ENCODE measurements at regions of chr12 and their contacts with region 1.

Region 1: GRCh38 chr12:26493656-26494055 is 298.3 kb downstream of the SSPN start:
- DNase-seq: peak; percentile 87
- H3K4me3 Mint-ChIP-seq: no peak overlapping the region
- H3K27ac Mint-ChIP-seq: peak overlapping the region; percentile 51
- H3K4me1 Mint-ChIP-seq: peaks cover 29% of the 10 kb centered on the region
- H3K27me3 Mint-ChIP-seq: no peaks in the 10 kb centered on the region
- CTCF ChIP-seq: no peak

Region 2: DNA sequence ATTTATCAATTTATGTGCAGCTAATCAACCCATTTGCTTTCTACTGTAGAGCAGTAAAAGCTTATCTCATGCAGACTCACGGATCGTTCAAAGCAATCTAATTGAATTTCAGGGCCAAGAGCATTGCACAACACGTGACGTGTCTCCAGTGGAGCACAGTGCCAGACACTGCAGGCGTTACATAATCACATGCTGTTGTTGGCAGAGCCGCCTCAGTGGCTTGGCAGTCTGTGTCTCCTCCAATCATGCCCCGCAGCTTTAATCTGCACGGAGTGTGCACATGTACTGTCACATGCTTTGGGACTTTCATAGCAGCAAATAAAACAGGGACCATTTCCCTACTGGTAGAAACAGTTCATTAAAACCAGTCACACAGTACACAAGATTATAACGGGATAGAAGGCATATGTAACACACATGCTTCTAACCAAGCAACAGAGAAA is 30.1 kb after region 1 on chr12:
- CTCF ChIA-PET with region 1: interaction called, 3 read pairs
- POLR2A ChIA-PET with region 1: interaction called, 60 read pairs
- intact Hi-C with region 1: no loop called
- DNase-seq: peak; percentile 98
- H3K4me3 Mint-ChIP-seq: peak overlapping the region; percentile 11
- H3K27ac Mint-ChIP-seq: no peak overlapping the region
- H3K4me1 Mint-ChIP-seq: peaks cover 12% of the 10 kb centered on the region
- H3K27me3 Mint-ChIP-seq: no peaks in the 10 kb centered on the region
- CTCF ChIP-seq: no peak

Region 3: GRCh38 chr12:26599096-26599695 is 105.5 kb after region 1 on chr12:
- CTCF ChIA-PET with region 1: no interaction called
- POLR2A ChIA-PET with region 1: no interaction called
- intact Hi-C with region 1: no loop called
- DNase-seq: no peak
- H3K4me3 Mint-ChIP-seq: no peak overlapping the region
- H3K27ac Mint-ChIP-seq: no peak overlapping the region
- H3K4me1 Mint-ChIP-seq: no peaks in the 10 kb centered on the region
- H3K27me3 Mint-ChIP-seq: no peaks in the 10 kb centered on the region
- CTCF ChIP-seq: no peak

Region 4: DNA sequence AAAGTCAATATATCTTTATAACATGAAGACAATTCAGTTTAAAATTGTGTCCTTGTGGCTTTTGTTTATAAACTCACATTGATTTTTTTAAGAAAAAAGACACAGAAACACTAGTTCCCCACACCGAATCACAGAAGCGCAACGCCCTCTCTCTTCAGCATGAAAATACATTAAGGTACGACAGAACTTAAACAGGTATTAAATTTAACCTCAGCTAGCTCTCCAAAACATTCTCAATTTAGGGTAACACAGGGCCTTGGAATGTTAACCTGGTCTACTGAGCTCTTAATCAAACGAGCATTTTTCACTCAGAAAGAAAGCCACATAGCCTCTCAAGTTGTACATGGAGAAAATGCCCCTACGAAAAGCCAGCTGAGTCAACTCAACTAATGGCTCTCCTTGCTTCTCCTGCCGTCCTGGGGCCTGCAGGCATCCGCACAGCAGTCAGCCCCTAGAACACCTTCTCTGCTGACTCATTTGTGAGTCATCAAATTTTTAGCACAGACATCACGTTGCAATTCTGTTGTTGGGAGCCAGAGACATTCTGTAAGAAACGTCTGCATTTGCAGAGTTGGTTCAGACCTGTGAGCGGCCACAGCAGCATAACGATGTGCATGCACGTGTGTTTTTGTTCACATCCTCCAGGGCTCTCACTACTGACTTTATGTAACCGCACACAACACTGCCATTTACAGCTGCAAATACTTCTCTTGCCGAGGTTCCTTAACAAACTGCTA is 197.7 kb after region 1 on chr12:
- CTCF ChIA-PET with region 1: no interaction called
- POLR2A ChIA-PET with region 1: interaction called, 10 read pairs
- intact Hi-C with region 1: no loop called
- DNase-seq: peak; percentile 96
- H3K4me3 Mint-ChIP-seq: peak overlapping the region; percentile 47
- H3K27ac Mint-ChIP-seq: peak overlapping the region; percentile 91
- H3K4me1 Mint-ChIP-seq: peaks cover 31% of the 10 kb centered on the region
- H3K27me3 Mint-ChIP-seq: no peaks in the 10 kb centered on the region
- CTCF ChIP-seq: no peak

Region 5: DNA sequence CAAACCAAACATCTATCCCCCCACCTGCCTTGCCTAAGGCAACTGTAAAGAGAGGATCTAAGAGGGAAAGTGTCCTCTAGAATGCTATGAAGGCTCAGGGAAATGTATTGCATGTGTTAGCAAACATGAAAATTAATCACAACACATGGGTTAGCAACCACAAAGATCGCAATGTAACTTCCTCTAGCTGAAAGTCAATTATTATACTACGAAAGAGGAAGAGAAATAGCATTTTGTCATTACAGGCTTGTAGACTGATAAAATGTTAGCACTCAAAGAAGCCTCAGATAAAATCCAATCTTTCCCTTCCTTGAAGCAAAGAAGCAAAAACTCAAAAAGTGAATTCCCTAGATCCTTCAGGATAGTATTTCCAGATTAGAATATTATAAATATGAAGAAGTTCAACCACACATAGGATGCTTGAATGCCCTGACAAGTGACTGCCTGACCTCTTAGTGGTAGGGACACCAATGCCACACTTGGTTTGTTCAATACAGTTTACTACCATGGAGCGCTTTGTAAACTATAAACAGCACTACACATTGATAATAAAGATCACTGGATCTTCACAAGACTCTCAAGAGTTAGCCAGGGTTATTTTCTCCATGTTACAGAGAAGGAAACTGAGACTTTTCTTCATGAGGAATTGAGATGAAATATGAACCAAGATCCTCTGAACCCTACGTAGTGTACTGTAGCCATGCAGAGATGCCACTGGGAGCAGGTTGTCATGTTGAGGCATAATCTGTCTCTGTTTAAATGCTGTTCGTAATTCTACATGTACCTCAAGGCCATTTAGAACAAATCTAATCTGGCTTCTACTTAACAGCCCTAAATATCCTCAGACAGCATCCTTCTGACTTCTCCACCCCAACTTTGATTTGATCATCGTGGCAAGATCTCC is 238.6 kb after region 1 on chr12:
- CTCF ChIA-PET with region 1: no interaction called
- POLR2A ChIA-PET with region 1: no interaction called
- intact Hi-C with region 1: no loop called
- DNase-seq: no peak
- H3K4me3 Mint-ChIP-seq: no peak overlapping the region
- H3K27ac Mint-ChIP-seq: no peak overlapping the region
- H3K4me1 Mint-ChIP-seq: peaks cover 9% of the 10 kb centered on the region
- H3K27me3 Mint-ChIP-seq: no peaks in the 10 kb centered on the region
- CTCF ChIP-seq: no peak